AG04450 (cell line): ENCODE measurements at regions of chr19 and their contacts with region 1.

Region 1: DNA sequence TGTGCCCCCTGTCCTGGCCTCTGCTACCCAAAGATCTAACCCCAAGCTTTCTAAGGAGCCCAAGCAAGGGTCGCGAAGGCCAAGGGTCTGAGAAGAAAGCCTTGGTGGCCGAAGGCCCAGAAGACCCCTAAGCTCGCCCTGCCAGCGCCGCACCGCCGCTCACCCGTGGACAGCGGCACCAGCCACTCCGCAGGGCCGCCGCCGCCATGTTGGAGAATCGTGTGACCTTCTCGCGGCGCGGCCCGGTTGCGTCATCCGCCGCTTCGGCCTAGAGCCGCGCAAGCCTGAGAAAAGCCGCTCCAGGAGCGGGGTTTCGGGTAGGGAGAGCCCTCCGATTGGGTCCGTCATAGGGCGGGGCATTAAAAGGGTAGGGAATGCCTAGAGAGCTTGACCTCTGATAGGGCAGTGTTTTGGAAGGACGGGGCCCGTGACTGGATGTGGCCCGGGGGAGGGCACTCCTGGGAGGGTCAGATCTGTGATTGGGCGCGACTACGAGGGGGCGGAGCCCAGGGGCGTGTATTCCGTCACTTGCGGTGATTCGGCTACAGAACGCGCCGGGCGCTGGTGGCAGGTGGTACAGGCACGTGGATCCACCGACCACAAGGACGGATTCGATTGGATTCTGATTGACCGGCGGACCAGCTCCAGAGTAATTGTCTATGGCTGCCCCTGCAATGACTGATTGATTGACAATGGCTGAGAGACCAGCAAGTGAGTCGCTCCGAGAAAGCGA is at the start of gene TIMM44:
- DNase-seq: peak; percentile 99
- H3K4me3 ChIP-seq: peak within 1 kb of the TSS; percentile 96
- H3K27ac ChIP-seq: peak within 1 kb of the TSS; percentile 93
- H3K27me3 ChIP-seq: no peaks in the 10 kb centered on the region
- CTCF ChIP-seq: no peak
- polyA plus RNA-seq, gene TIMM44: 42.0 and 43.3 TPM in 2 replicates

Region 2: DNA sequence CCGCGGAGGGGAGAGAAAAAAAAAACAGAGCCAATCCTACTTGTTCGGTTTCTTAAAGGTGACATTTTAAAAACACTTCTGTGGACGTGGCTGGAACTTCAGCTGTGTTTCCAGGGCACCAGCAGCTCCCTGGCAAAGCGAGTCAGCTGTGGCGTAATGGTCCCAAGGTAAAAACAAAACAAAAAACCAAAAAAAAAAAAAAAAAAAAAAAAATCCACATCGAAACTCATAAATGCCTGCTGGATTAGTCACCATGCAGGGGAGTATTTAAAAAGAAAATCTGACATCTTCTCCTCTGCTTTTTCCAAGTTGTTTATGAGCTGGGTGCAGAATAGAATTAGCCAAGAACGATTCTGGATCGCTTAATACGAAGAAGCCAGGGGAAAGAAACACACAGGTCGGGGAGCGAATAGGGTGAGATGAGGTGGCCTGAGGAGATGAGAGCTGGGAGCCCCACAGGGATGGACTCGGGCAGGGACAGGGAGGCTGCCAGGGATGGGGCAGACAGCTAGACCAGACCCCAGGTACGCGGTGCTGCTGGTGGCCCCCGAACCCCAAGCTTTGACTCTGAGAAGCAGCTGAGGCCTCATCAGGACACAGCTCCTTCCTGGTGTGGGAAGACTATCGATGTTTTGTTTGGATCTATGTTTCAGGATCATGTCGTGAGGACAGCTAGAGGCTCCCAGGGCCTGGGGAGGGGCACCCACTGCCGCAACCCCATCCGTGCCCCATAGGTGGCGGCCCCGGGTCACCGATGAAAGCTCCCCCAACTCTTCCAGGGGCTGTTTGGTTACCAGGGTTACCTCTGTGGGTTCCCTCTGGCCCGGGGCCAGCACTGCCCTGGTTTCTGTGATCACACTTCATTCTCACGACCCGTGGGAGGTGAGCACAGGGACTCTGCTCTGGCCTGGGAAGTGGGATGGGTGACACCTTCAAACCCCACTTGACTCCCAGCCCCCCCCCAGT is 14.6 kb before region 1 on chr19:
- CTCF ChIA-PET with region 1: interaction called, 35 read pairs
- POLR2A ChIA-PET with region 1: interaction called, 22 read pairs
- DNase-seq: peak; percentile 78
- H3K4me3 ChIP-seq: peak overlapping the region; percentile 29
- H3K27ac ChIP-seq: peak overlapping the region; percentile 99
- H3K27me3 ChIP-seq: no peaks in the 10 kb centered on the region
- CTCF ChIP-seq: peak; percentile 47

Region 3: GRCh38 chr19:7959211-7959610 is 15.6 kb after region 1 on chr19:
- CTCF ChIA-PET with region 1: interaction called, 23 read pairs
- POLR2A ChIA-PET with region 1: interaction called, 5 read pairs
- DNase-seq: no peak
- H3K4me3 ChIP-seq: no peak overlapping the region
- H3K27ac ChIP-seq: no peak overlapping the region
- H3K27me3 ChIP-seq: no peaks in the 10 kb centered on the region
- CTCF ChIP-seq: no peak

Region 4: GRCh38 chr19:8252922-8253589 is 309.4 kb after region 1 on chr19:
- CTCF ChIA-PET with region 1: interaction called, 57 read pairs
- POLR2A ChIA-PET with region 1: interaction called, 4 read pairs
- DNase-seq: peak; percentile 38
- H3K4me3 ChIP-seq: no peak overlapping the region
- H3K27ac ChIP-seq: no peak overlapping the region
- H3K27me3 ChIP-seq: peaks cover 2% of the 10 kb centered on the region
- CTCF ChIP-seq: peak; percentile 99

Region 5: DNA sequence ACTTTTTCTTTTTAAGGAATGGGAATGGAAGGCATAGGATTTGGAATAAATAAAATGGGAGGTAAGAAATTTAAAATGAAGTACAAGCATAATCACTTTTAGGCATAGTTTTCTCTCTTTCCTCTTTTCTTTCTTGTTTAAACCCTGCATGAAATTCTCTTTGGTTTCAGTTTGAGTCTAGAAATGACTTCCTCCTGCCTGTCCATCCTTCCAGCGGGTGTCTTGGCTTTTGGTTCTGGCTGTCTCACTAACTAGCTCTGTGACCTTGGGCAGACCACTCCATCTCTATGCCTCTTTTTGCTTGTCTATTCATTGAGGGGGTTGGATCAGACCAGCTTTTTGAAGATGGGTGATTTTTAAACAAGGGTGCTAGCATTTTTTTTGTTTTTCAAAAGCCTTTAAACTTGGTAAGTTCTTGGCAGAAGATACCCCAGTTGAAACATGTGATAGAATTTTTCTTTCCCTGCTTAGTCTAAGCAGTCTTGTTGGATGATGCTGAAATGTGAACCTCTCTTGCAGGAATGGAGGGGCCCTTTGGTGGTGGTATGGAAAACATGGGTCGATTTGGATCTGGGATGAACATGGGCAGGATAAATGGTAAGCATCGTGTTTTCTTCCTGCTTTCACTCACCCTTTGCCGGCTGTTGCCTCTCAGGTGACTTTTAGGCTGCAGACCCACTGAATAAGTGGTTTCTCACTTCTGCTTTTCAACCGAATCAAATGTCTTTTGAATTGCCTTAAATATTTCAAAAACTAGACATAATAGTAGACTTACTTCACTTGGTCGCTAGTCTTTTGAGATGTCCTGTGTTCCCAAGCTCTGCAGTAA is 530.3 kb after region 1 on chr19:
- CTCF ChIA-PET with region 1: no interaction called
- POLR2A ChIA-PET with region 1: no interaction called
- DNase-seq: no peak
- H3K4me3 ChIP-seq: no peak overlapping the region
- H3K27ac ChIP-seq: no peak overlapping the region
- H3K27me3 ChIP-seq: no peaks in the 10 kb centered on the region
- CTCF ChIP-seq: no peak